PC-9 (cell line): ENCODE measurements at regions of chr16 and their contacts with region 1.

Region 1: GRCh38 chr16:58629572-58630104 is at the start of gene CNOT1:
- DNase-seq: peak; percentile 98 to 99
- H3K4me3 ChIP-seq: peak within 1 kb of the TSS; percentile 77
- H3K27ac ChIP-seq: peak within 1 kb of the TSS; percentile 90
- H3K4me1 ChIP-seq: peaks cover 14% of the 10 kb centered on the region
- H3K27me3 ChIP-seq: no peaks in the 10 kb centered on the region
- CTCF ChIP-seq: no peak
- total RNA-seq, gene CNOT1: 141 and 233 TPM in 2 replicates

Region 2: GRCh38 chr16:58515125-58515870 is 114.3 kb before region 1 on chr16 and contains the start of gene SETD6:
- CTCF ChIA-PET with region 1: no interaction called
- POLR2A ChIA-PET with region 1: no interaction called
- intact Hi-C with region 1: loop called (anchors 10 kb)
- DNase-seq: peak; percentile 77 to 88
- H3K4me3 ChIP-seq: peak within 1 kb of the TSS; percentile 99
- H3K27ac ChIP-seq: peak within 1 kb of the TSS; percentile 54
- H3K4me1 ChIP-seq: peaks cover 20% of the 10 kb centered on the region
- H3K27me3 ChIP-seq: no peaks in the 10 kb centered on the region
- CTCF ChIP-seq: no peak; the same call in 1 of the 2 replicates
- total RNA-seq, gene SETD6: 19.2 and 21.4 TPM in 2 replicates

Region 3: DNA sequence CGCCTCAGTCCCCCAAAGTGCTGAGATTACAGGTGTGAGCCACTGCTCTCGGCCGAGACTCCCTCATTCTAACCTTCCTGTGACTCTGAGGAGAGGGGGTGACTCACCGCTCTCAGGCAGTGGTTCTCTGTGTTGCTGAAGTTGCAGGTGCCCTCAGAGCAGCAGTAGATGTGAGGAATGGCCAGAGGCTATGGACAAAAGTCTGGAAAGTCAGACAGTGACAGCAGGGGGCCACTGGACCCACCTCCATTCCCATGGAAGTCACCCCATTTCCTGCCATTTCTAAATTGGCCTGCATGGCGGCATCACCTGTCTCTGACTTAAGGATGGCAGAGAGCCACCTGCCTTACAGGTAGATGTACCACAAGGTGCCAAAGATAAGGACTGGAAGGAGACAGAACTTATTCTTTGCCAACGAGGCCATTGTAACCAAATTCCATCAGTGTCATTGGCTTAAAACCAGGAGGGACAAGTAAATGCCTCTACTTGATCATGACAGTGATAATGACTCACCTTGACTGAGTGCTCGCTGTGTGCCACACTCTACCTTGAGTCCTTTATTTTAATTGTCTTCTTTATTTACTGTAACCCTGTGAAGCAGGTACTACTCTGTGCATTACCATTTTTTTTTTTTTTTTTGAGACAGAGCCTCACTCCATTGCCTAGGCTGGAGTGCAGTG is 15.3 kb after region 1 on chr16:
- CTCF ChIA-PET with region 1: no interaction called
- POLR2A ChIA-PET with region 1: no interaction called
- intact Hi-C with region 1: loop called (anchors 1 kb)
- DNase-seq: peak; percentile 82 to 92
- H3K4me3 ChIP-seq: no peak overlapping the region
- H3K27ac ChIP-seq: peak overlapping the region; percentile 69
- H3K4me1 ChIP-seq: peaks cover 19% of the 10 kb centered on the region
- H3K27me3 ChIP-seq: no peaks in the 10 kb centered on the region
- CTCF ChIP-seq: no peak